IMR-90 (cell line): ENCODE measurements at regions of chr17 and their contacts with region 1.

Region 1: GRCh38 chr17:30477083-30477773 is at the start of gene GOSR1:
- DNase-seq: peak; percentile 95
- ATAC-seq: peak; percentile 99
- H3K4me3 ChIP-seq: peak within 1 kb of the TSS; percentile 70
- H3K27ac ChIP-seq: peak within 1 kb of the TSS; percentile 91
- H3K4me1 ChIP-seq: peaks cover 2% of the 10 kb centered on the region
- H3K27me3 ChIP-seq: no peaks in the 10 kb centered on the region
- CTCF ChIP-seq: peak; percentile 92
- POLR2A ChIP-seq: peak; percentile 95
- RAD21 ChIP-seq: peak; percentile 81
- total RNA-seq, gene GOSR1: 47.5 and 64.7 TPM in 2 replicates

Region 2: DNA sequence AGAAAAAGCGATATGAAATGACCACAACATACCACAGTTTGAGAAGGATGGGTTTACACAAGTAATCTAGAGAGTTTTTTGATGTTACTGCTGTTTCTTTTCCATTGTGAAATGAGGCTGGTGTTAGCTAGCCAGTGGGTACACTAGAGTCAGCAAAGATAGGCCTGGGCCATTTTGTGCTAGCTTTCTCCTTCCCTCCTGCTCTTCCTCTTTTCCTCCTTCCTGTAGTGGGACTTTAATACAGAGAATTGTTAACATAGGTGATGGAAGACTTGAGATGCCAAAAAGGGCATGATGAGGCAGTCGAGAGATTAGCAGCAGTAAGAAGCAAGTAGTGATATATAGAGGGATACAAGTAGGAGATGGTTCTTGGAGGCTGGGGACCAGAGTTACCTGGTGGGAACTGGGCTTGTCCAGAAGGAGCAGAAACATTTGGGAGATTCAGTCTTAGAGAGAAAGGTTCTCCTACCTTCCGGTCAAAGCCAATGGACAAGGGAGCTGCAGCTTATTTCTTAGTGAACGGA is 352.9 kb before region 1 on chr17:
- CTCF ChIA-PET with region 1: no interaction called
- POLR2A ChIA-PET with region 1: no interaction called
- dilution Hi-C with region 1: no loop called
- in situ Hi-C with region 1: no loop called
- intact Hi-C with region 1: loop called (anchors 10 kb)
- DNase-seq: no peak
- ATAC-seq: no peak
- H3K4me3 ChIP-seq: no peak overlapping the region
- H3K27ac ChIP-seq: no peak overlapping the region
- H3K4me1 ChIP-seq: no peaks in the 10 kb centered on the region
- H3K27me3 ChIP-seq: no peaks in the 10 kb centered on the region
- CTCF ChIP-seq: no peak
- POLR2A ChIP-seq: no peak
- RAD21 ChIP-seq: no peak

Region 3: DNA sequence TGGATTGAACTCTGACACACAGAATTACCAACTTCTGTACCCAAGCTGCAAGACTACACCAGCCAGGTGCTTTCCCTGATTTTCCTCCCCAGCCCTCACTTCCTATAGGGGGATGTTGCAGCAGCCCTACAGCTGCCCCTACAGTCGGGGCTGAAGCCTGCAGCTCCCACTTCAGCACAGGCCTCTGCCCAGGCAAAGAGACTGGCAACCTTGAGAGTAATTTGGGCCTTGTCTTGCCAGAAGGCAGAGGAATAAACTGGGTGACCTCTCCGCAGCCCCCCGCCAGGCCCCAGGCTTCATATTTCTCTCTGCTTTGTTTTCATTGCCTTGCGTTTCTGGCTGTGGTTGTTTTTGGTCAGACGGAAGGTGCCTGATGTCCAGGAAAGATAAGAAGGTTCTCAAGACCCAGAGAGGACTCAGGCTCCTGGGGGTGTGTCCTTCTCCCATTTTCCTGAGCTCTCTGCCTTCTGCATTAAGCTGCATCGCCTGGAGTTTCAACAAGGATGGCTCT is 273.7 kb before region 1 on chr17:
- CTCF ChIA-PET with region 1: no interaction called
- POLR2A ChIA-PET with region 1: no interaction called
- dilution Hi-C with region 1: no loop called
- in situ Hi-C with region 1: no loop called
- intact Hi-C with region 1: no loop called
- DNase-seq: no peak
- ATAC-seq: no peak
- H3K4me3 ChIP-seq: no peak overlapping the region
- H3K27ac ChIP-seq: no peak overlapping the region
- H3K4me1 ChIP-seq: no peaks in the 10 kb centered on the region
- H3K27me3 ChIP-seq: peaks cover 17% of the 10 kb centered on the region
- CTCF ChIP-seq: no peak
- POLR2A ChIP-seq: no peak
- RAD21 ChIP-seq: no peak

Region 4: GRCh38 chr17:30291543-30292285 is 185.5 kb before region 1 on chr17 and contains the start of gene BLMH:
- CTCF ChIA-PET with region 1: no interaction called
- POLR2A ChIA-PET with region 1: interaction called, 4 read pairs
- dilution Hi-C with region 1: no loop called
- in situ Hi-C with region 1: no loop called
- intact Hi-C with region 1: loop called (anchors 2 kb)
- DNase-seq: peak; percentile 77
- ATAC-seq: peak; percentile 97
- H3K4me3 ChIP-seq: peak within 1 kb of the TSS; percentile 76
- H3K27ac ChIP-seq: peak within 1 kb of the TSS; percentile 64
- H3K4me1 ChIP-seq: no peaks in the 10 kb centered on the region
- H3K27me3 ChIP-seq: peaks cover 2% of the 10 kb centered on the region; the same call in 1 of the 2 replicates
- CTCF ChIP-seq: no peak
- POLR2A ChIP-seq: peak; percentile 67
- RAD21 ChIP-seq: no peak
- total RNA-seq, gene BLMH: 20.8 and 27.2 TPM in 2 replicates

Region 5: DNA sequence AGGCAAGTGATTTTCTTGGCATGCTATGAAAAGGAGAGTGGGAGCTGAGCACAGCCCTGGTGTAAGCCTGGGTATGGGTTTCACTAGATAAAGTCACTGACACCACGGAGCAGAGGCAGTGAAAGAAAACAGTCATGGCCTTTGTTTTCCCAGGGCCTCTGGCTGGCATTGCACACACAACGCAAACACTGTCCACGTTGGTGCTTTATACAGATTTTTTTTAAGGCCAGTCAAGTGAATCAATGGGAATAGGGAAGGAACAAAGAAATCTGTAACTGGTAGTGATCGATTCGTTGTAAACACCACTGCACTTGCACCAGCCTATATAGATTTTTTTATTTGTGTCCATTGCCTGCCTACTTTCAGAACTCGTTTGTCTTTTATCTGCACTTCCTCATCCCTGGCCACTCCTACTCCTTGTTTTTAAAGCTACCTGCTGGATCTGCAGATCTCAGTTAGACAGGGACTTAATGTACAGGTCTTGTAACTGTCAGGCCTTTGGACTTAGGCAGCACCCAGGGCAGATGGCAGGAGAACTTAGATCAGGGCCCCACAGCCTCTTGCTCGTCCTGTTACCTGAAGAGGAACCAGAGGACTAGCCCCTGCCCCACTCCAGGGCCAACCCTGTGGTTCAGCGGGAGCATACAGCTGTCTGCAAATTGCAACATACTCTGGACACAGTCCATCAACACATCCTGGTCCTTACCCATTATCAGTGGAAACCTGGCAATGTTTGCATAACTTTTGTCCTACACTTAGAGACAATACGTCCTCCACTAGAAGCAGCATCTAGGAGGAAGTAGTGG is 132.7 kb before region 1 on chr17:
- CTCF ChIA-PET with region 1: no interaction called
- POLR2A ChIA-PET with region 1: no interaction called
- dilution Hi-C with region 1: no loop called
- in situ Hi-C with region 1: no loop called
- intact Hi-C with region 1: loop called (anchors 5 kb)
- DNase-seq: peak; percentile 59
- ATAC-seq: no peak; the same call in 1 of the 2 replicates
- H3K4me3 ChIP-seq: no peak overlapping the region
- H3K27ac ChIP-seq: no peak overlapping the region
- H3K4me1 ChIP-seq: peaks cover 19% of the 10 kb centered on the region
- H3K27me3 ChIP-seq: no peaks in the 10 kb centered on the region
- CTCF ChIP-seq: no peak
- POLR2A ChIP-seq: no peak
- RAD21 ChIP-seq: no peak

Region 6: GRCh38 chr17:30600049-30600829 is 123.0 kb after region 1 on chr17:
- CTCF ChIA-PET with region 1: no interaction called
- POLR2A ChIA-PET with region 1: no interaction called
- dilution Hi-C with region 1: no loop called
- in situ Hi-C with region 1: no loop called
- intact Hi-C with region 1: loop called (anchors 1 kb)
- DNase-seq: peak; percentile 70
- ATAC-seq: peak; percentile 93
- H3K4me3 ChIP-seq: peak overlapping the region; percentile 75
- H3K27ac ChIP-seq: peak overlapping the region; percentile 92
- H3K4me1 ChIP-seq: peaks cover 2% of the 10 kb centered on the region
- H3K27me3 ChIP-seq: no peaks in the 10 kb centered on the region
- CTCF ChIP-seq: peak; percentile 50
- POLR2A ChIP-seq: peak; percentile 75
- RAD21 ChIP-seq: peak; percentile 25; the same call in 1 of the 2 replicates

Region 7: GRCh38 chr17:30716461-30717300 is 239.5 kb after region 1 on chr17:
- CTCF ChIA-PET with region 1: interaction called, 3 read pairs
- POLR2A ChIA-PET with region 1: no interaction called
- dilution Hi-C with region 1: no loop called
- in situ Hi-C with region 1: loop called (anchors 5 kb)
- intact Hi-C with region 1: loop called (anchors 2 kb)
- DNase-seq: peak; percentile 16
- ATAC-seq: no peak
- H3K4me3 ChIP-seq: no peak overlapping the region
- H3K27ac ChIP-seq: no peak overlapping the region
- H3K4me1 ChIP-seq: no peaks in the 10 kb centered on the region
- H3K27me3 ChIP-seq: no peaks in the 10 kb centered on the region
- CTCF ChIP-seq: peak; percentile 24; the same call in 1 of the 2 replicates
- POLR2A ChIP-seq: no peak
- RAD21 ChIP-seq: no peak